CD8-positive, alpha-beta T cell (primary cell): ENCODE measurements at regions of chr16 and their contacts with region 1.

Region 1: GRCh38 chr16:19717771-19718602 is at the starts of genes IQCK and KNOP1:
- DNase-seq: peak; percentile 72 to 97 (median 86)
- ATAC-seq: peak; percentile 89
- H3K4me3 ChIP-seq: peak within 1 kb of the TSS; percentile 80 to 95
- H3K4me3 Mint-ChIP-seq: peak within 1 kb of the TSS; percentile 91
- H3K27ac ChIP-seq: peak within 1 kb of the TSS; percentile 49 to 64
- H3K27ac Mint-ChIP-seq: peak within 1 kb of the TSS; percentile 71
- H3K4me1 ChIP-seq: peaks cover 6% of the 10 kb centered on the region
- H3K4me1 Mint-ChIP-seq: peaks cover 32% of the 10 kb centered on the region
- H3K27me3 ChIP-seq: no peaks in the 10 kb centered on the region
- H3K27me3 Mint-ChIP-seq: no peaks in the 10 kb centered on the region
- CTCF ChIP-seq: no peak
- total RNA-seq, gene IQCK: 0.72 to 2.1 TPM
- total RNA-seq, gene KNOP1: 3.4 to 3.6 TPM

Region 2: DNA sequence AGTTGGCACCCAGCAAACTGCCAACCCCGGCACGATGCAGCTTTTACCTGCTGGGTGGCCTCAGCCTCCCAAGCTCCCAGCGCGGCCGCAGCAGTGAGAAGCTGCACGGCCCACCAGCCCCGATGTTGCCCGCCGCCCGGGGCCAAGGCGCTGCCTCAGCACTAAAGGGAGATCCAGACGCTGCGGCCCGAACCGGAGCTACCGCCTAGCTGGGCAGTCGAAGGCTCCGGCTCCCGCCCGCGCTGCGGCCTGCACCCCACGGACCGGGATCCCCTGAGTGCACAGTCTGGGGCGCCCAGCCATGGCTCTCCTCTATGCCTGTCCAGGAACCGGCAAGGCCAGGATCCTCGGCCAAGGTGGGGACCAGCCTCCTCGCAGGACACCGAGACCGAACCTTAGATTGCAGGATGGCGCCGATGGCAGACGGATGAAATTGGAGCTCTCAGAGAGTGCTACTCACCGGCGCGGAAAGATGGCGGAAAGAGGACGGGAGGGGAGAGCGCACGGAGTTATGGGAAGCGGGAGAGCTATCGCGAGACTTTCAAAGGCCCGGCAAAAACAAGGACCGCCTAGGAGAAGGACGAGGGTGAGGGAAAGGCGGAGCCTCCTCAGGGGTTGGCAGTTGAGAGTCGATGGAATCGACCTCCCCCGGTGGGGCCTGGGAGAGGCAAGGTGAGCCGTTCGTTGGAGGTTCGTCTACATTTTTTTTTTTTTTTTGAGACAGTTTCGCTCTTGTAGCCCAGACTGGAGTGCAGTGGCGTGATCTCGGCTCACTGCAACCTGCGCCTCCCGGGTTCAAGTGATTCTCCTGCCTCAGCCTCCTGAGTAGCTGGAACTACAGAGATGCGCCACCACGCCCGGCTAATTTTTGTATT is 927.9 kb before region 1 on chr16 and contains the start of gene RPS15A:
- CTCF ChIA-PET with region 1: no interaction called
- POLR2A ChIA-PET with region 1: no interaction called
- intact Hi-C with region 1: loop called in 1 of 2 experiments (anchors 10 kb)
- DNase-seq: peak; percentile 81 to 99 (median 91)
- ATAC-seq: peak; percentile 96
- H3K4me3 ChIP-seq: peak within 1 kb of the TSS; percentile 98 to 100
- H3K4me3 Mint-ChIP-seq: peak within 1 kb of the TSS; percentile 95
- H3K27ac ChIP-seq: peak within 1 kb of the TSS; percentile 76 to 88
- H3K27ac Mint-ChIP-seq: peak within 1 kb of the TSS; percentile 88
- H3K4me1 ChIP-seq: peaks cover 39% of the 10 kb centered on the region
- H3K4me1 Mint-ChIP-seq: peaks cover 50% of the 10 kb centered on the region
- H3K27me3 ChIP-seq: no peaks in the 10 kb centered on the region
- H3K27me3 Mint-ChIP-seq: no peaks in the 10 kb centered on the region
- CTCF ChIP-seq: no peak
- total RNA-seq, gene RPS15A: 3,671 to 3,755 TPM

Region 3: GRCh38 chr16:19446300-19446846 is 271.6 kb before region 1 on chr16:
- CTCF ChIA-PET with region 1: no interaction called
- POLR2A ChIA-PET with region 1: no interaction called
- intact Hi-C with region 1: no loop called
- DNase-seq: no peak
- ATAC-seq: no peak
- H3K4me3 ChIP-seq: no peak overlapping the region
- H3K4me3 Mint-ChIP-seq: no peak overlapping the region
- H3K27ac ChIP-seq: no peak overlapping the region
- H3K27ac Mint-ChIP-seq: no peak overlapping the region
- H3K4me1 ChIP-seq: no peaks in the 10 kb centered on the region
- H3K4me1 Mint-ChIP-seq: no peaks in the 10 kb centered on the region
- H3K27me3 ChIP-seq: no peaks in the 10 kb centered on the region
- H3K27me3 Mint-ChIP-seq: peaks cover 15% of the 10 kb centered on the region
- CTCF ChIP-seq: no peak

Region 4: GRCh38 chr16:19521471-19522396 is 196.3 kb before region 1 on chr16 and contains the start of gene GDE1:
- CTCF ChIA-PET with region 1: no interaction called
- POLR2A ChIA-PET with region 1: no interaction called
- intact Hi-C with region 1: loop called in 1 of 2 experiments (anchors 1 kb)
- DNase-seq: peak; percentile 76 to 96 (median 92)
- ATAC-seq: peak; percentile 74
- H3K4me3 ChIP-seq: peak within 1 kb of the TSS; percentile 62 to 85
- H3K4me3 Mint-ChIP-seq: peak within 1 kb of the TSS; percentile 93
- H3K27ac ChIP-seq: peak within 1 kb of the TSS; percentile 67 to 77
- H3K27ac Mint-ChIP-seq: peak within 1 kb of the TSS; percentile 92
- H3K4me1 ChIP-seq: peaks cover 32% of the 10 kb centered on the region
- H3K4me1 Mint-ChIP-seq: peaks cover 61% of the 10 kb centered on the region
- H3K27me3 ChIP-seq: no peaks in the 10 kb centered on the region
- H3K27me3 Mint-ChIP-seq: no peaks in the 10 kb centered on the region
- CTCF ChIP-seq: peak; percentile 22
- total RNA-seq, gene GDE1: 26.2 to 29.0 TPM

Region 5: DNA sequence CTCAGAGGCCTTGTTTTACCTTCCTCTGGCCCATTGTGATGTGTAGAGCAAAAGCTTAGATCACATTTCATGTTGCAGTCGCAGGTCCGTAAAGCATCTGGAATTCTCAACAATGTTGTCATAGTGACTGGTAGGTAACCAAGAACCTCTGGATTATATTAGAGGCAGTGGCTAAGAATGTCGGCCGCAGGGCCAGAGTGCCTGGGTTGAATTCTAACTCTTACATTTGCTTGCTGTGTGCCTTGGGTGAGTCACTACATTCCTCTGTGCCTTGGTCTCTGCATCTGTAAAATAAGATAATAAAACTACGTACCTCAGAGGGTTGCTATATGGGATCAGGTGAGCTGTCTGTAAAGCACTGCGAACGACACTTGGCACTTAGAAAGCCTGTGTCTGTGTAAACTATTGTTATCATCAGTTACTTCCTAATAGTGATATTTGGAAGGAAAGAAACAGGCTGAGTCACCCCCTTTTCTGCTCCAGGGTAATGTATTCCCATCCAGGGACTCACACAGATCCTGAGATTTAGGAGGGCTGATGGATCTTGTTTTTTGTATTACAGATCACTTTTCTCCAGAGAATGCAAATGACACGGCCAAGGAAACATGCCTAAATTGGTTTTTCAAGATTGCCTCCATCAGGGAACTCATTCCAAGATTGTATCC is 110.2 kb before region 1 on chr16:
- CTCF ChIA-PET with region 1: no interaction called
- POLR2A ChIA-PET with region 1: no interaction called
- intact Hi-C with region 1: no loop called
- DNase-seq: no peak
- ATAC-seq: no peak
- H3K4me3 ChIP-seq: no peak overlapping the region
- H3K4me3 Mint-ChIP-seq: no peak overlapping the region
- H3K27ac ChIP-seq: no peak overlapping the region
- H3K27ac Mint-ChIP-seq: no peak overlapping the region
- H3K4me1 ChIP-seq: no peaks in the 10 kb centered on the region
- H3K4me1 Mint-ChIP-seq: no peaks in the 10 kb centered on the region
- H3K27me3 ChIP-seq: no peaks in the 10 kb centered on the region
- H3K27me3 Mint-ChIP-seq: no peaks in the 10 kb centered on the region
- CTCF ChIP-seq: no peak